ENCODE measurements at regions of chr13 and their contacts with region 1.

Region 1: GRCh38 chr13:91133941-91134802 is 213.3 kb upstream of the MIR17HG start:
- DNase-seq: peak; percentile 27
- ATAC-seq: peak; percentile 79
- H3K4me3 ChIP-seq: no peak overlapping the region
- H3K27ac ChIP-seq: no peak overlapping the region
- H3K4me1 ChIP-seq: no peaks in the 10 kb centered on the region
- H3K27me3 ChIP-seq: no peaks in the 10 kb centered on the region
- CTCF ChIP-seq: peak; percentile 71

Region 2: GRCh38 chr13:90950160-90950559 is 184.0 kb before region 1 on chr13:
- CTCF ChIA-PET with region 1: no interaction called
- POLR2A ChIA-PET with region 1: no interaction called
- in situ Hi-C with region 1: no loop called
- intact Hi-C with region 1: no loop called
- DNase-seq: no peak
- ATAC-seq: no peak
- H3K4me3 ChIP-seq: no peak overlapping the region
- H3K27ac ChIP-seq: no peak overlapping the region
- H3K4me1 ChIP-seq: no peaks in the 10 kb centered on the region; the same call in 1 of the 2 replicates
- H3K27me3 ChIP-seq: no peaks in the 10 kb centered on the region
- CTCF ChIP-seq: no peak

Region 3: DNA sequence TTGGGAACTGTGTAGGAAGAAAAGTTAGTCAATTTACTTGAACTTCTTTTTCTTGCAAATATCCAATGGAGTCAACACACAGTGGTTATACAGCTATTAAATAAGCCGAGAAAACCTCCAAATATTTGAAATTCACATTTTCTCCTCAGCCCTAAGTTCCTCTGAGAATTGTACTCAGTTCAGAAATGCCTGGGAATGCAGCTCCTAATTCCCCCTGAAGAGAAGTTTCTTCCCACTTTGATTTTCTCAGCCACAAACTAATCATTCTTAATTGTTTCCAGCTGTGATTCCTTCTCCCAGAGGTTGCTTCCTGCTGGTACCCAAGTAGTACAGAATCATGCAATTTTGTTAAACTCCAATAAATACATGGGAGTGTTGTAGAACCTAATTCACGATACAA is 32.8 kb before region 1 on chr13:
- CTCF ChIA-PET with region 1: interaction called, 10 read pairs
- POLR2A ChIA-PET with region 1: no interaction called
- in situ Hi-C with region 1: no loop called
- intact Hi-C with region 1: no loop called
- DNase-seq: no peak
- ATAC-seq: no peak
- H3K4me3 ChIP-seq: no peak overlapping the region
- H3K27ac ChIP-seq: no peak overlapping the region
- H3K4me1 ChIP-seq: no peaks in the 10 kb centered on the region
- H3K27me3 ChIP-seq: no peaks in the 10 kb centered on the region
- CTCF ChIP-seq: no peak

Region 4: GRCh38 chr13:91185294-91185863 is 51.2 kb after region 1 on chr13:
- CTCF ChIA-PET with region 1: interaction called, 3 read pairs
- POLR2A ChIA-PET with region 1: no interaction called
- in situ Hi-C with region 1: no loop called
- intact Hi-C with region 1: loop called (anchors 2 kb)
- DNase-seq: no peak
- ATAC-seq: no peak
- H3K4me3 ChIP-seq: no peak overlapping the region
- H3K27ac ChIP-seq: no peak overlapping the region
- H3K4me1 ChIP-seq: no peaks in the 10 kb centered on the region
- H3K27me3 ChIP-seq: no peaks in the 10 kb centered on the region
- CTCF ChIP-seq: peak; percentile 26; the same call in 1 of the 2 replicates

Region 5: DNA sequence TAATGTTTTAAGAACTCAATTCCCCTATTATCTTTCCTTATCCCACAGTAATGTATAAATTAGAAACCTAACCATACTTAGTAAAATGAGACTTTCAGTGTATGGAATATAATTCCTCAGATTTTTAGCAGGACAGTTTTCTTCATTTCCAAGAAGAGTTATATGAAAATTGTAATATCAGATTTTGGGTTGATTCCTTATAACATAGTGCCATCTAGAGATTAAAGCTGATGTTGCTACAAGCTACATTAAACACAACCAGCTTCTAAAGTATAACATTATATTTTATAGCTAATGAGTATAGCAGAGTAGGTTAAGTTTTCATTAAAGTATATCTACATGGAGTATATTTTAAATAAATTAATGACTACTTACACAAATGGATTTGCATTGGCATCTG is 113.6 kb after region 1 on chr13:
- CTCF ChIA-PET with region 1: interaction called, 3 read pairs
- POLR2A ChIA-PET with region 1: no interaction called
- in situ Hi-C with region 1: no loop called
- intact Hi-C with region 1: loop called (anchors 5 kb)
- DNase-seq: no peak
- ATAC-seq: no peak
- H3K4me3 ChIP-seq: no peak overlapping the region
- H3K27ac ChIP-seq: no peak overlapping the region
- H3K4me1 ChIP-seq: no peaks in the 10 kb centered on the region
- H3K27me3 ChIP-seq: no peaks in the 10 kb centered on the region
- CTCF ChIP-seq: peak; percentile 20; the same call in 1 of the 2 replicates

Region 6: DNA sequence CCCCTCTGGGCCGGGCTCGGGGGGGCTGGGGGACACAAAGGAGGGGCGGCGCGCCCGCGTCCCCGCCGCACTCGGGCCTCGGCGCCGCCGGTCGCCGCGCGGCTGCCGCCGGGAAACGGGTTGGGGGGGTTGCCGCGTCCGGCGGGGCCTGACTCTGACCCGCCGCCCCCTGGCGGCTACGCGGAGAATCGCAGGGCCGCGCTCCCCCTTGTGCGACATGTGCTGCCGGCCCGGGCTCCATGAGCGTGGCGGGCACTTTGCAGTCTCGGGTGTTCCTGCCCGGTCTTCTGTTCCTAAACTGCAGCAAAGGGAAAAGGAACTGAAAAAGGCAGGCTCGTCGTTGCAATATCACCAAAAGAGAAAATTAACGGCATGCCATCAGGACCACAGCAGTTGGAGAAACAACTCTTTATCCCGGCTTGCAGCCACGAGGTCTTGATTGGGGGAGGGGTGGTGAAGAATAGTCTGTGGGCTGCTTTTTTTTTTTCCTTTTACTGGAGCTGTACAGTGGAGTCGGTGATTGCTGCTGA is 214.8 kb after region 1 on chr13:
- CTCF ChIA-PET with region 1: no interaction called
- POLR2A ChIA-PET with region 1: no interaction called
- in situ Hi-C with region 1: no loop called
- intact Hi-C with region 1: loop called (anchors 5 kb)
- DNase-seq: peak; percentile 69
- ATAC-seq: peak; percentile 78
- H3K4me3 ChIP-seq: peak overlapping the region; percentile 67 to 74
- H3K27ac ChIP-seq: peak overlapping the region; percentile 90
- H3K4me1 ChIP-seq: peaks cover 9% of the 10 kb centered on the region
- H3K27me3 ChIP-seq: peaks cover 7% of the 10 kb centered on the region; the same call in 1 of the 2 replicates
- CTCF ChIP-seq: peak; percentile 92